BJ (cell line): ENCODE measurements at regions of chr19 and their contacts with region 1.

Region 1: DNA sequence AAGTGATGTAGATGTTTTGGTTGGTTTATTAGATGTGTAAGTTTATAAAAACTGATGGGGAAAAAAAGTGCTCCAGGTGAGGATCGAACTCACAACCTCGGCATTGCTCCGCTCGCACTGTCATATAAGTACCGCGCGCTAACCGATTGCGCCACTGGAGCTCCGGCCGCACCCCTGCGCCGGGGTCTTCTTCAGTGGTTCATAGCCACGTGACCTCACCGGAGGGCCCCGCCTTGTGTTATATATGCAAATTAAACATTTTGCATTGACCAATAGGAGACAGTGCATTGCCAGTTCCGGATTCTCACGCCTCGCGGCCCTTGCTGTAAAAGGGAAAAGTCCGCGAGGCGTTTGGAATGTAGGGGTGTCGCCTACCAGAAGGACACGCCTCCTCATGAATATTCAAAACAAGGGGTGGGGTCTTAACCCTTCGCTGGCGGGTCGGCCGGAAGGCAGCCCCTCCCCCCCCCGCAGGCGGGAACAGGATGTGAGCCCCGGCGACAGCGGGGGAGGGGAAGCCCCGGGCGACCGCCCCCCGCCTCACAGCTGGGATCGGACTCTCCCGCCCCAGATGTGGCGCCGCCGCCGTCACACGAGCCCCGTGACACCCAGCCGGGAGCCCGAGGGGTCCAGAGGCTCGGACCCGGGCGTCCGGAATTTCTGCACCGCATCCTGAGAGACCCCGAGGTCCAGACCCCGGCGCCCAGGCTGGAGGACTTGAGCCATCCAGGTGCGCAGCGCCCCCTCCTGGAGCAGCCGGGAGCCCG is at the start of gene PLEKHG2:
- DNase-seq: peak; percentile 99
- H3K4me3 ChIP-seq: peak within 1 kb of the TSS; percentile 78
- H3K27me3 ChIP-seq: no peaks in the 10 kb centered on the region
- CTCF ChIP-seq: peak; percentile 90
- polyA plus RNA-seq, gene PLEKHG2: 12.5 and 20.6 TPM in 2 replicates

Region 2: GRCh38 chr19:39390755-39391592 is 21.3 kb before region 1 on chr19 and contains the starts of genes MED29 and PAF1:
- CTCF ChIA-PET with region 1: interaction called, 178 read pairs
- POLR2A ChIA-PET with region 1: interaction called, 4 read pairs
- DNase-seq: peak; percentile 99
- H3K4me3 ChIP-seq: peak within 1 kb of the TSS; percentile 100
- H3K27me3 ChIP-seq: no peaks in the 10 kb centered on the region
- CTCF ChIP-seq: 0 out of 2 replicates have a peak, but pooled peaks have one; percentile 4
- polyA plus RNA-seq, gene MED29: 28.5 and 36.6 TPM in 2 replicates
- polyA plus RNA-seq, gene PAF1: 50.2 and 51.8 TPM in 2 replicates

Region 3: GRCh38 chr19:39397360-39398296 is 14.7 kb before region 1 on chr19:
- CTCF ChIA-PET with region 1: interaction called, 178 read pairs
- POLR2A ChIA-PET with region 1: interaction called, 7 read pairs
- DNase-seq: no peak
- H3K4me3 ChIP-seq: no peak overlapping the region
- H3K27me3 ChIP-seq: no peaks in the 10 kb centered on the region
- CTCF ChIP-seq: peak; percentile 98

Region 4: DNA sequence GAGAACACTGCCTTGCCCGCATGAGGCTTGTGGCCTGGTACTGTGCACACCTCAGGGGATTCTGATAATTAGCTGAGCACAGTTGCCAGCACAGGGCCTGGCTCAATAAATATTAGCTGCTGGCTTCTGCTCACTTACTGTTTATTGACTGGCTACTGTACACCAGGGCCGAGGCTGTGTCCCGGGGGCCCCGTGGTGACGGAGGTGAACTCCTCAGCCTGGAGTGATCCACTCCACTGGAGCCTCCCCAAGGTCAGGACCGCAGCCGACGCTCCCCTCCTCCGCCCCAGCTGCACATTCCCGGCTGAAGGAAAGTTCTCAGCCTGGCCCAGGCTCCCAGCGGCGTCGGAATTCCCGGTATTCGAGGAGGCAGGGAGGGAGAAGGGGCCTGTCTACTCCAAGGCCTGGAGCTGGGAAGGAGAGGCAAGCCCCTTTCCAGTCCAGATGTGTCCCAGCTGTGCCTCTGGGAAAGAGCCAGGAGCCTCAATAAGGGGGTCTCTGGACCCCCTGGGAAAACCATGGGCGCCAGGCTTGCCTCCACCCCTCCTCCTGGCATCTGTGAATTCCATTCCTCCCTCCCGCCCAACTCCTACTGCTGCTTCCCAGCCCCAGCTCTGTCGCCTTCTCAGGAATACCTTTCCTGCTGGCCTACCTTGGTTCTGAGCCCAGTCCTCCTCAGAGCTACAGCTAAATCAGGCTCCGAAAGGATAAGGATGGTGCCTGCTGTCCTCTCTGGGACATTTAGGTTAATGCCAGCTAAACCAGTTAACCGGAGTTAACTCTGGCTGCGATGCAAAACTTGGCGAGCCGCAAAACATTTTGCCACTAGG is 16.2 kb after region 1 on chr19:
- CTCF ChIA-PET with region 1: interaction called, 15 read pairs
- POLR2A ChIA-PET with region 1: interaction called, 5 read pairs
- DNase-seq: peak; percentile 63
- H3K4me3 ChIP-seq: no peak overlapping the region
- H3K27me3 ChIP-seq: no peaks in the 10 kb centered on the region
- CTCF ChIP-seq: no peak

Region 5: GRCh38 chr19:39435499-39436349 is 23.4 kb after region 1 on chr19 and contains the start of gene RPS16:
- CTCF ChIA-PET with region 1: interaction called, 9 read pairs
- POLR2A ChIA-PET with region 1: interaction called, 17 read pairs
- DNase-seq: peak; percentile 66
- H3K4me3 ChIP-seq: peak within 1 kb of the TSS; percentile 98
- H3K27me3 ChIP-seq: no peaks in the 10 kb centered on the region
- CTCF ChIP-seq: no peak
- polyA plus RNA-seq, gene RPS16: 2,401 and 2,896 TPM in 2 replicates